Activated T-helper 2 cell treated with anti-CD3 and anti-CD28 coated beads, Interferon-gamma antibody, Interleukin-2, Interleukin-4, amounts not matched to agents 10 μg/mL and 5 μg/mL and 100 μg/mL, durations not matched to agents 14 hours and 24 hours and 36 hours (primary cell): ENCODE measurements at regions of chr6 and their contacts with region 1.

Region 1: GRCh38 chr6:30814136-30815040 is 69.9 kb upstream of the DDR1 start:
- DNase-seq: no peak
- H3K4me3 Mint-ChIP-seq: peak overlapping the region; percentile 46
- H3K27ac Mint-ChIP-seq: peak overlapping the region; percentile 96
- H3K4me1 Mint-ChIP-seq: peaks cover 72% of the 10 kb centered on the region
- H3K27me3 Mint-ChIP-seq: no peaks in the 10 kb centered on the region

Region 2: DNA sequence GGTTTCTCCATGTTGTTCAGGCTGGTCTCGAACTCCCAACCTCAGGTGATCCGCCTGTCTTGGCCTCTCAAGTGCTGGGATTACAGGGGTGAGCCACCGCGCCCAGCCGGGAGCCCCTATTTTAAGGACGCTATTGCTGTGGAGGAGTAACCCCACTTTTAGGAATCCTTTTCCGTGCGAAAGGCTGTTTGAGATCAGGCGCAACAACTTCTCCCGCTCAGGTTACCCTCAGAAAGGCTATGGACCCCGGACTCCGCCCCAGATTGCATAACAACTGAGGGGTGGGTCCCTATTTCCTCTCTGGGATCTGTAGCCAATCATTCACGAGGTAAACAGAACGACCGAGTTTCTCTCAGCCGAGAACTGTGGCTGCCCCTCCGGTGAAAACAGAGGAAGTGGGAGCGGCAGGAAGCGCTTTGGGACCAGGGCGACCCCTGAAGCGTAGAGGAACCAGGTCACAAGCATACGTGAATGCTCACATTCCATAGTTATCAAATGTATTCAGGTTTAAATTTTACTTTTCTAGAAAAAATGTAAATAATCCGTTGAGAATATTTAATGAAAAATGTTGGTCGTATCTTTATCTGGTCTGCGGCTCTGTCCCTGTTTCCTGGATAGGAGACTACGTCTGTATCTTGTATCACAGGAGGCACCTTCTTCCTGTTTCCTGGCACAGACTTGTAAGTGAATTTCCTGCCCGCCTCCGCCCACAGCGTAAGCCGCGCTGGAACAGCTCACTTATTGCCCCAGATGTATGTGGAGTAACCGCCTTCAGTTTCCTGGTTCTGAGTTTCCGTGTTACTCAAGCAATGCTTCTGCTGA is 298.2 kb before region 1 on chr6:
- intact Hi-C with region 1: loop called (anchors 5 kb)
- DNase-seq: peak; percentile 90
- H3K4me3 Mint-ChIP-seq: peak overlapping the region; percentile 75
- H3K27ac Mint-ChIP-seq: peak overlapping the region; percentile 88
- H3K4me1 Mint-ChIP-seq: peaks cover 36% of the 10 kb centered on the region
- H3K27me3 Mint-ChIP-seq: no peaks in the 10 kb centered on the region

Region 3: GRCh38 chr6:30664994-30665767 is 149.2 kb before region 1 on chr6:
- intact Hi-C with region 1: no loop called
- DNase-seq: no peak
- H3K4me3 Mint-ChIP-seq: no peak overlapping the region
- H3K27ac Mint-ChIP-seq: no peak overlapping the region
- H3K4me1 Mint-ChIP-seq: peaks cover 5% of the 10 kb centered on the region
- H3K27me3 Mint-ChIP-seq: no peaks in the 10 kb centered on the region

Region 4: DNA sequence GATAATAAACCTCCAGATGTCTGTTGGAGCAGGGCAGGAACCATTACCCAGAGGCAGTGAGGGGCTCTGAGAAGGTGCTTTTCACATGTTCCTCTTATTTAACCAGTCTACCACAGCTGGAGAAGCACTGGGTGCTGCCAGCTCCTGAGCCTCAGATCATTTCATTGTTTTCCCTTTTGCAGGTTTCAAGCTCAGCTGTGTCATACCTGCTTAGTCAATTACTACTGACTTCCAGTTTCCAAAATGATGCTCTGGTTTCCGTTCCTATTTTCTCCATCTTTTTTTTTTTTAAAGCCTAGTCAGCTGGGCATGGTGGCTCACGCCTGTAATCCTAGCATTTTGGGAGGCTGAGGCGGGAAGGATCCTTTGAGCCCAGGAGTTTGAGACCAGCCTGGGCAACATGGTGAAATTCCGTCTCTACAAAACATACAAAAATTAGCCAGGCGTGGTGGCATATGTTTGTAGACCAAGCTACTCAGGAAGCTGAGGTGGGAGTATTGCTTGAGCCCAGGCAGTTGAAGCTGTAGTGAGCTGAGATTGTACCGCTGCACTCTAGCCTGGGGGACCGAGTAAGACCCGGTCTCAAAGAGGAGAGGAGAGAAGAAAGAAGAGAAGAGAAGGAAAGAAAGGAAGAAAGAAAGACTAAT is 78.6 kb before region 1 on chr6:
- intact Hi-C with region 1: loop called (anchors 1 kb)
- DNase-seq: no peak
- H3K4me3 Mint-ChIP-seq: peak overlapping the region; percentile 83
- H3K27ac Mint-ChIP-seq: peak overlapping the region; percentile 97
- H3K4me1 Mint-ChIP-seq: peaks cover 71% of the 10 kb centered on the region
- H3K27me3 Mint-ChIP-seq: no peaks in the 10 kb centered on the region

Region 5: DNA sequence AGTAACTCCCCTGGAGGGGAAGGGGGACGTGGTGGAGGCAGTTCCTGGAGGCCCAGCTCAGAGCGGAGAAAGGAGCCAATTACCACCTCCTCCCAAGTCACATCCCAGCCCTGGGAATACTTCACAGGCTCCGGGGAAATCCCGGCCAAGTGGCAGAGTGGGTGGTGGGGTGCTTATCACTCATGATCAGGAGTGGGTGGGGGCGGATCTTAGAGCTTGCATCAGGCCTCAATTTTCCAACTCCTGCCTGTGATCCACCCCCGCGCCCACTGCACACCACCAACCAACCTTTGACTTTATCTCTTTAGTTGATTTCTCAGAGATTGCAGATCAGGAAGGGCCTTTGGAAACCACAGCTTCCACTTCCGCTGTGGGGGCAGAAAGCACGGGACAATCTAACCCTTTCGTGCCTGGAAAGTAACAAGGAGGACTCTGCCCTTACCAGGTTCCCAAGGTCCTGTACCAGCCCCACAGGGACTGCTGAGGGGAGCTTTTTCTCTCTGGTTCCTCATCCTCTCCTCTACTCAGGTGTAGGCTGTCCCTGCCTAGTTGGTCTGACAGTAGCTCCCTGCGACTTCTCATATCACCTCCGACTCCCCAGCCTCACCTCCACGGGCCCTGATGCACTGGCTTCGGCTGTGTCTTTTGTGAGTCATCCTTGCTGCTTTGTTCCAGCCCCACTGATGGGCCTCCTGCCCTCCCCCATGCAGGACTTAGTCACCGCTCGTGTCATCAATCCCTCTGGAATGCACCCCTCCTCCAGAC is 45.1 kb before region 1 on chr6:
- intact Hi-C with region 1: loop called (anchors 1 kb)
- DNase-seq: peak; percentile 68
- H3K4me3 Mint-ChIP-seq: peak overlapping the region; percentile 66
- H3K27ac Mint-ChIP-seq: peak overlapping the region; percentile 98
- H3K4me1 Mint-ChIP-seq: peaks cover 68% of the 10 kb centered on the region
- H3K27me3 Mint-ChIP-seq: no peaks in the 10 kb centered on the region

Region 6: DNA sequence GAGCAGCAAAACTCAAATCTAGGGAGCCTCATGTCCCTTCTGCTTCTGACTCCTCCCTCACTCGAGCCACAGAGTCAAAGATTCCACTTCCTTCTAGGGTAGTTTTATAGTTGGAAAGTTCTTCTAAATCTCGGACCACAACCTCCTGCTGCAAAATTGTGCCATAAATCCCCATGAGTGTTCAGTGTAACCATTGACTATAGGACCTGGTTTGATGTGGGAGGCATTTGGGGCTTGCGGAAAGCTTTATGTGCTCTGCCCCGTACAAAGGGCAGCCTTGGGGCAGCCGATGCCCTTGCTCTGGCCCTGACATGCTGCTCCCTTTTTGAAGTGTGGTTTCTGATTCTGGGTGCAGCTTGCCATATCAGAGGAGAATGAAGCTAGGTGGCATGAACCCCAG is 26.4 kb before region 1 on chr6:
- intact Hi-C with region 1: loop called (anchors 1 kb)
- DNase-seq: peak; percentile 31
- H3K4me3 Mint-ChIP-seq: peak overlapping the region; percentile 66
- H3K27ac Mint-ChIP-seq: peak overlapping the region; percentile 96
- H3K4me1 Mint-ChIP-seq: peaks cover 57% of the 10 kb centered on the region
- H3K27me3 Mint-ChIP-seq: no peaks in the 10 kb centered on the region

Region 7: DNA sequence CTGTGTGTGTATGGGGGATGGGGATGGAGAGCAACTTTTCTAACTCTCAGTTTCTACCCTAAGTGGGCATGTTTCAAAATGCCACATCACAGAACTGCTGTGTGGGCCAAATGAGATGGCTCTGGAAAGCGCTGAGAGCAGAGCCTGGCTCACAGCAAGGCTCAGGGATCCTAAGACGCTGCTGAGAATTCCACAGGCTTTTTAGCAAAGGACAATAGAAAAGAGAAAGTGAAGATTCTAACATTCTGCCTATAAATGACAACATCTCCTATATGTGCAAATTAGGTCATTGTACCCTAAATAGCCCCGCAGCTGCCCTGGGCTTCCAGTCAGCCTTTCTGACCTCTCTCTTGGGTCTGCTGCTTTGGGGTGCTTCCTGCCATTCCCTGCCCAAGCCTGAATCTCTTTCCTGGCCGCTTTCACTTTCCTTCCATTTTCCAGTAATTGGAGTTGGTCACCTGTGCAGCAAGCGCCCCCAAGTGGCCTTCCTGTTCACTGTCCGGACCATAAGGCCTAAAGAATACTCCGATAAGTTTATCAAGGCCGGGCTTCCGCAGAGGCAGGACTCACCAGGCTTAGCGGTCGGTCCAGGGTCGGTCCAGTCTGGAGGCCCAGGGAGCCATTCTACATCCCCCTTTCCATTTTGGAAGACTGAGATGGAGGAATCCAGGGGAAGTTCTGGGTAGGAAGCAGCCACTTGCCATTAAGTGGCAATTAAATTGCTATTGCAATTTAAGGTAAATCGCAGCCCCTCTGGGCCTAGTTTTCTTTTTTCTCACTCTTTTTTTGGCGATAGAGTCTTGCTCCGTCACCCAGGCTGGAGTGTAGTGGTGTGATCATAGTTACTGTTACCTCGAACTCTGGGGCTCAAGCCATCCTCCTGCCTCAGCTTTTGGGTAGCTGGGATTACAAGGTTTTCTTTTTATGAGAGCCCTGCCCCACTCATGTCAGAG is 63.3 kb after region 1 on chr6:
- intact Hi-C with region 1: loop called (anchors 5 kb)
- DNase-seq: peak; percentile 64
- H3K4me3 Mint-ChIP-seq: peak overlapping the region; percentile 60
- H3K27ac Mint-ChIP-seq: peak overlapping the region; percentile 85
- H3K4me1 Mint-ChIP-seq: peaks cover 19% of the 10 kb centered on the region
- H3K27me3 Mint-ChIP-seq: no peaks in the 10 kb centered on the region